ENCODE measurements at regions of chr15 and their contacts with region 1.

Region 1: GRCh38 chr15:100612539-100612938 is 10.2 kb downstream of the ASB7 start:
- DNase-seq: no peak
- H3K4me3 ChIP-seq: no peak overlapping the region
- H3K27ac ChIP-seq: no peak overlapping the region
- H3K4me1 ChIP-seq: no peaks in the 10 kb centered on the region
- H3K27me3 ChIP-seq: no peaks in the 10 kb centered on the region
- CTCF ChIP-seq: no peak

Region 2: DNA sequence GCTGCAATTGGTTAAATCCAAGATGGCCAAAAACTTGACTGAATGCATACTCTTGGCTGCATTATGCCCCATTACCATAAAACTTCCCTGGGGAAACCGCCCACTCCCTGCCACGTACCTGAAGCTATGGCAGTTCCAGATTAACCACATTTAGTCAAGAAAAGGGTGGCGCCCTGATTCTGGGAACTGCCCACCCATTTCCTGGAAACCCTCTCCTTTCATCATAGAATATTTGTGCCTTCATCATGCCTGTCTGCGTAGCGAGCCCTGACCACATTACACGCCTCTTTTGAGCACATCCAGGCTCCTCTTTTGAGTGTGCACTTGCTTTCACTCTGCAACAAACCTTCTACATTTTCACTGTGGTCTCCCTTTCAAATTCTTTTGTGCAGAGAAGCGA is 15.7 kb before region 1 on chr15:
- CTCF ChIA-PET with region 1: no interaction called
- POLR2A ChIA-PET with region 1: no interaction called
- intact Hi-C with region 1: no loop called
- DNase-seq: no peak
- H3K4me3 ChIP-seq: no peak overlapping the region
- H3K27ac ChIP-seq: no peak overlapping the region
- H3K4me1 ChIP-seq: peaks cover 7% of the 10 kb centered on the region; the same call in 1 of the 2 replicates
- H3K27me3 ChIP-seq: no peaks in the 10 kb centered on the region
- CTCF ChIP-seq: no peak

Region 3: GRCh38 chr15:100987143-100987542 is 374.6 kb after region 1 on chr15:
- CTCF ChIA-PET with region 1: no interaction called
- POLR2A ChIA-PET with region 1: interaction called, 14 read pairs
- intact Hi-C with region 1: no loop called
- DNase-seq: no peak
- H3K4me3 ChIP-seq: no peak overlapping the region
- H3K27ac ChIP-seq: no peak overlapping the region
- H3K4me1 ChIP-seq: no peaks in the 10 kb centered on the region
- H3K27me3 ChIP-seq: no peaks in the 10 kb centered on the region
- CTCF ChIP-seq: no peak

Measured in PC-9 (cell line).